Left ventricle myocardium superior (tissue), 1 donor: ENCODE measurements at regions of chr16 and their contacts with region 1.

Region 1: GRCh38 chr16:2919511-2920255 is 8.0 kb downstream of the FLYWCH1 start:
- DNase-seq: no peak
- ATAC-seq: peak; percentile 72

Region 2: DNA sequence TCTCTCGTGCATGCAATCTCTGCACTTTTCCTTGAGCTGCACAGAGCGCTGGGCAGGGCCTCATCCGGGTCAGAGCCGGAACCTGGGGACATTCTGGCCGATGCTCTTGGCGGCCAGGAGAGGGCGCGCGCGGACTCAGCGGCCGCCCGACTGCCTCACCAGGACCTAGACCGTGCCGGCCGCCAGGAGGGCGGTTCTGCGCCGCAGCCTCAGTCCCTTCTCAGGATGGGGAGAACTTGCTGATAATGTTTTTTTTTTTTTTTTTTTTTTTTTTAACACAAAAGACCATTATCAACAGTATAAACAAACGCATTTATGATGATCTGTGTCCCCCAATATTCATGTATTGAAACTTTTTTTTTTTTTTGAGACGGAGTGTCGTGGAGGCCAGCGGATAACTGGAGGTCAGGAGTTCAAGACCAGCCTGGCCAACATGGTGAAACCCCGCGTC is 44.7 kb before region 1 on chr16:
- intact Hi-C with region 1: loop called (anchors 5 kb)
- DNase-seq: peak; percentile 90
- ATAC-seq: peak; percentile 99

Region 3: GRCh38 chr16:3274490-3274889 is 354.8 kb after region 1 on chr16:
- intact Hi-C with region 1: no loop called
- DNase-seq: no peak
- ATAC-seq: no peak